ENCODE measurements at regions of chr5 and their contacts with region 1.

Region 1: DNA sequence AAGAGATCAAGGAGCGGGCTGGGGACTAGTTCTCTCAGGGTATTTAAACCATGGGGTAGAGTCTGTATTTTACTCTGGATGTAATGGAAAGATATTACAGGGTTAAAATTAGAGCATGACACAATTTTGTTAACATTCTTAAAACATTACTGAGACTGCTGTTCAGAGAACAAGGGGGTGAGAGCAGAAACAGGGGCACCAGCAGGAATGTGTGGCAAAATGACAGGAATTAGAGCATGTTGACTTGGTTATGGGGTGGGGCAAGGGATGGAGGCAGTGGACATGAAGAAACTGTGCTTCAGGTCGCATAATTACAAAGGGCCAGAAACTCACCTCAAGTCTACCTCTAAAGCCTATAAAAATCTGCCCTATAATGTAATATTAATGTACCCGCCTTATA is 75.0 kb downstream of the TMEM232 start:
- DNase-seq: no peak
- ATAC-seq: no peak
- H3K4me3 ChIP-seq: no peak overlapping the region
- H3K27ac ChIP-seq: no peak overlapping the region
- H3K4me1 ChIP-seq: no peaks in the 10 kb centered on the region
- H3K27me3 ChIP-seq: no peaks in the 10 kb centered on the region
- CTCF ChIP-seq: no peak

Region 2: GRCh38 chr5:110397281-110397680 is 254.2 kb before region 1 on chr5:
- intact Hi-C with region 1: no loop called
- DNase-seq: no peak
- ATAC-seq: no peak
- H3K4me3 ChIP-seq: no peak overlapping the region
- H3K27ac ChIP-seq: no peak overlapping the region
- H3K4me1 ChIP-seq: no peaks in the 10 kb centered on the region
- H3K27me3 ChIP-seq: no peaks in the 10 kb centered on the region
- CTCF ChIP-seq: no peak

Region 3: DNA sequence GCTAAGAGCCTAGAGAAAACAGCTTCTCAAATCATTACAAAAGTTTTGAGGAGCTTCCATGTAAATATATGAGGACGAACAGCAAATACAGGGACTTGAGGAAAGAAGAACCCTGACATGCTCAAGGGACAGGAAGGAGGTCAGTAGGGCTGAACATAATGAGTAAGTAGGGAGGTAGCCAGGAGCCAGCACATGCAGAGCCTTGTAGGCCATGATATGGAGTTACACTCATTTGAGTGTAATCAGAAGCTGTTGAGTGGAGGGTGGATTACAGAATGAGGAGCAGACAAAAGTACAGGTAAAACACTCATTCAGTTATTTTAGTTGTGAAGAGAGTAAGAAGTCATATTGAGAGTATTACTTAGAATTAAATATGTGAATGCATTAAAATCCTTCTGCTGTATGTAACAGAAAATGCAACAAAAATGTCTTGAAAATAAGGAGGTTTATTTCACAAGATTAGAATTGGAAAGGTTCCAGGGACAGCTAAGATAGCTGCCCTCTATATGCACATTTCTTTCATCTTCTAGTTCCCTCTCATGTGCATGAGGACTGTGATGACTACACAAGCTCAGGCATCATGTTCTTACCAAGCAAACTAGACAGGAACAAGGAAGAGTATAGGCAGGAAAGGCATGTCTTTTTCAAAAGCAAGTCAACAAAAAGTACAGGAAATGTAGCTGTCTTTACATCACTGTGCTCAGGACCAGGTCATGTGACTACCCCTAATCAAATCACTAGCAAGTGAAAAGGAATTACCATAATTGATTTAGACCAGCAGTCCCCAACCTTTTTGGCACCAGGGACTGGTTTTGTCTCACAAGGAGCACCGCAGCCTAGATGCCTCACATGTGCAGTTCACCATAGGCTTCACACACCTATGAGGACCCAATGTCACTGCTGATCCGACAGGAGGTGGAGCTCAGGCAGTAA is 12.3 kb before region 1 on chr5:
- intact Hi-C with region 1: loop called in 1 of 10 experiments (anchors 1 kb)
- DNase-seq: no peak
- ATAC-seq: no peak
- H3K4me3 ChIP-seq: no peak overlapping the region
- H3K27ac ChIP-seq: no peak overlapping the region
- H3K4me1 ChIP-seq: no peaks in the 10 kb centered on the region
- H3K27me3 ChIP-seq: no peaks in the 10 kb centered on the region
- CTCF ChIP-seq: no peak

Measured in heart right ventricle (tissue), 16 donors.